Dendritic cell treated with granulocyte-macrophage colony-stimulating factor and Interleukin-4, amounts not matched to agents 40 ng/mL and 50 ng/mL, for 4 days (primary cell): ENCODE measurements at regions of chr12 and their contacts with region 1.

Region 1: DNA sequence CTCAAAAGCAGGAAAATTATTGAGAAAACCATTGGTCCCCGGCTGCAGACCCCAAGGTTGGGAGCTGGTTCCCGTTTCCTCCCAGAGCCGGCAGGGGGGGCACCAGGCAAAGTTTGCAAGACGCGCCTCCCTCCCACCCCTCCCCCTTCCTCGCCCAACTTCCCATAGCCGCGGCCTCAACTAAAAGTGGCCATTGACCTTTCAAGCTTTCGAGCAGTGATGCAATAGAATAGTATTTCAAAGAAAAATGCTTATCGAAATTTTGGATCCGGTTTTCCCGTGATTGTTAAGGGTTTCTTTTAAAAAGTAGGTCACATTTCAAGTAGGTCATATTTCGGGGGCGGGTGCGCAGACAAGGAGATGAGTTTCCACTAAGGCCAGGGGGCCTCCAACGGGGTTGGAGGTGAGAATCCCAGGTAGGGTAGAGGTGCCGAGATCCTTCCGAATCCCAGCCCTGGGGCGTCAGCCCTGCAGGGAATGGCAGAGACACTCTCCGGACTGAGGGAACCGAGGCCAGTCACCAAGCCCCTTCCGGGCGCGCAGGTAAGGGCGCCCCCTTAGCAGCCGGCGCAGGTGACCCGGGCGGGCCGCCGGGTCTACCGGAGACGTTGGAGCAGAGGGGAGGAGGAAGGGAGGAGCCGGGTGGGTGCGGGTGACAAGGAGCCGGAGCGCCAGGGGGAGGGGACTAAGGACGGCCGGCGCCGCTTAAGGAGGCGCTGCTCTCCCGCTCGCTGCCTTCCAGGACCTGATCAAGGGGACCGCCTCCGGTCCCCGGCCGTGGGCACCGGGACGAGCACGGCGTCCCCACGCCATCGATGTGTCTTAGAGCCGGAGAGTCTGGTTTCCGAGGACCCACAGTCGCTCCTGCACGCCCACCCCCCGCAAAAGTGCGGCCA is 2.6 kb upstream of the SOCS2 start:
- H3K4me3 Mint-ChIP-seq: peak overlapping the region; percentile 86
- H3K27ac Mint-ChIP-seq: peak overlapping the region; percentile 93
- H3K4me1 Mint-ChIP-seq: peaks cover 30% of the 10 kb centered on the region
- H3K27me3 Mint-ChIP-seq: peaks cover 60% of the 10 kb centered on the region

Region 2: DNA sequence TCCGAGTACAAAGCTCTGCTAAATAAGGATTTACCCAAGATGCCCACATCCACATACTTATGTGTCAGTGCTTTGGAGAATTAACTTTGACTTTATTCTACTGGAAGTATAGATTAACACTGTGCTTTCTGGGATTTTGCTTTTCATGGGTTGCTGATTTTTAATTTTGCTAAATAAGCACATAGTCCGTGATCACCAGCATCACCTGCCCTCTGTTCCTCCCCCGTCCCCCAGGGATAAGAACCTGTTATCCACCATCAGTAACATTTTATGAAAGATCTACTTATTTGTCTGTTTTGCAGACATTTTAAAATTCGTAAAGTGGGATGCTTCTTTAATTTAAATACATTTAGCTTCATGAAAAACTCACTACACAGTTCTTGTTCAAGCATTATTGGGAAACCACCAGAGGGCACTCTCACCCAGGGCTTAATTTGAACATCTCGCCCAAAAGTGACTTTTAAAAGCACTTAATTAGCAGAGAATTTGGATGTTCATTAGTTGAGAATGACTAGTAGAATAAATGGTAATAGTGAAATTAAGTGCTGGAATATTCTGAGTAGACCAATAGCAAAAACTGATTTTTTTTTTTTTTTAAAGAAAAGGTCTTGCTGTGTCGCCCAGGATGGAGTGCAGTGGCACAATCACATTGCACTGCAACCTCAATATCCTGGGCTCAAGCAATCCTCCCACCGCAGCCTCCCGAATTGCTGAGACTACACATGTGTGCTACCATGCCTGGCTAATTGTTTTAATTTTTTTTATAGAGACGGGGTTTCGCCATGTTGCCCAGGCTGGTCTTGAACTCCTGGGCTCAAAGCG is 66.9 kb before region 1 on chr12:
- intact Hi-C with region 1: loop called (anchors 2 kb)
- H3K4me3 Mint-ChIP-seq: no peak overlapping the region
- H3K27ac Mint-ChIP-seq: no peak overlapping the region
- H3K4me1 Mint-ChIP-seq: no peaks in the 10 kb centered on the region
- H3K27me3 Mint-ChIP-seq: no peaks in the 10 kb centered on the region

Region 3: DNA sequence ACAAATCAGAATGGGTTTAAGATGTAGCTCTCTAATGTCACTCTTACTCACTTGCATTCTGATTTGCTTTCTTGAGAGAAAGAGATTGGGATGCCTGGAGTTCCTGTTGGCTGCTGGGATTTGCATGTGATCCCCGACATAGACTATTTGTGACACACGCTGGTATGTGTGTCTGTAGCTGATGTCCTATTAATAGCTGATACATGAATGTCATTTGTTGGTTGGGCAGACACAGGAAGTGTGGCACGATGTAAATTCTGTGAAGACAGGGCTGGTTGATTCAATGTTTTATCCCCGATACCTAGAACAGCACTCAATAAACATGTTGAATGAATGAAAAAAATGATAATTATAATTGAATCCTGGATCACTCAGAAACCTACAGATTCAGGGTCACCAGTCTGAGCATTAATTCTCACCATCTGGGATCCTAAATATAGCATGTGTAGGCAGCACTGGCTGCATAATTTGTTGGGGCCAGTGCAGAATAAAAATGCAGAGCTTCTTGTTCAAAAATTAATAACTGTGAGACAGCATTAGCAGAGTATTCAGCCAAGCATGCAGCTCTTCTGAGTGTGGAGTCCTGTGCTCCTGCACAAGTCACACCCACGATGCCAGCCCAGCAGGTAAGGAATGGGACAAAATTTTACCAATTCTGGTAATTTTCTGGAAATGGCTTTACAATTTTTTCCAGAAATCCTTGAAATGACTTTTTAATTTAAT is 33.0 kb before region 1 on chr12:
- intact Hi-C with region 1: no loop called
- H3K4me3 Mint-ChIP-seq: no peak overlapping the region
- H3K27ac Mint-ChIP-seq: no peak overlapping the region
- H3K4me1 Mint-ChIP-seq: no peaks in the 10 kb centered on the region
- H3K27me3 Mint-ChIP-seq: no peaks in the 10 kb centered on the region

Region 4: DNA sequence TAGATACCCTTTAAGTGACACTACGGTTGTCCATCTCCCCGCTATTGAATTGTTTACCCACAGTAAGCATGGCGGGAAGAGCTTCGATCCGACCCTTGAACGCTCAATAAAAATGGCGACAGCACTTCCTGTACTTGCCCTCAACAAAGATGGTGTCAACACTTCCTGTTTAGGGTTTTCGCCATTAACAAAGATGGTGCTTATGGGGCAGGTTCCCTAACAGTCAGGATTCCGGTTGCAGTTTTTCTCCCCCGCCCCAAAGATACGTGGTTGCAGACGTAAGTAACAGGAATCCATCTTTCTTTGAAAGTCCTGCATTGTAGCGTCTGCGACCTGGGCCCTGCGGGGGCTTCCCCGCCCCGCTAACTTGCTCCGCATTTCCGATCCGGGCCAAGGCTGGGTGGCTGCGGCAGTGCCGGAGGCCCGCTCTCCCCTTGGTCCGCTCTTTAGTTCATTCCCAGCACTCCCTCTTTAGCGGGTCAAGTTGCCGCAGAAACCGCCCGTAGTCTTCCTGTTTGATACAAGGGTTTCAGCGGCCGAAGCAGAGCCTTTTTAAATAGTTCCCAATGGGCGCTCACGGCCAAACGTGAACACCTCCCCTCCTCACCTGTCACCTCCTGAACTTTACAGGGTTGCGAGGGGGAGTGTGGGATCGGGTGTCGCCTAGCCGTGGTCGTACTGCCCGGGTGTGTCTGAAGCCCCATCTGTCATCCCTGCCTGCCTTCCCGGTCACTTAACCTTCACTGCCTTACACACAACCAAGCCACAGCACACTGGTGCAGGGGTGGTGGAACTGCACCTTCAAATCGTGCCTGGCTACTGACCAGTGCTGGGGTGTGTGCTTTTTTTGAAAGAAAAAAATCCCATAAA is 107.5 kb after region 1 on chr12 and contains the start of gene CRADD:
- intact Hi-C with region 1: loop called (anchors 2 kb)
- H3K4me3 Mint-ChIP-seq: peak within 1 kb of the TSS; percentile 89
- H3K27ac Mint-ChIP-seq: peak within 1 kb of the TSS; percentile 100
- H3K4me1 Mint-ChIP-seq: peaks cover 20% of the 10 kb centered on the region
- H3K27me3 Mint-ChIP-seq: peaks cover 5% of the 10 kb centered on the region

Region 5: GRCh38 chr12:93802698-93803423 is 233.0 kb after region 1 on chr12:
- intact Hi-C with region 1: no loop called
- H3K4me3 Mint-ChIP-seq: no peak overlapping the region
- H3K27ac Mint-ChIP-seq: no peak overlapping the region
- H3K4me1 Mint-ChIP-seq: peaks cover 17% of the 10 kb centered on the region
- H3K27me3 Mint-ChIP-seq: no peaks in the 10 kb centered on the region

Region 6: DNA sequence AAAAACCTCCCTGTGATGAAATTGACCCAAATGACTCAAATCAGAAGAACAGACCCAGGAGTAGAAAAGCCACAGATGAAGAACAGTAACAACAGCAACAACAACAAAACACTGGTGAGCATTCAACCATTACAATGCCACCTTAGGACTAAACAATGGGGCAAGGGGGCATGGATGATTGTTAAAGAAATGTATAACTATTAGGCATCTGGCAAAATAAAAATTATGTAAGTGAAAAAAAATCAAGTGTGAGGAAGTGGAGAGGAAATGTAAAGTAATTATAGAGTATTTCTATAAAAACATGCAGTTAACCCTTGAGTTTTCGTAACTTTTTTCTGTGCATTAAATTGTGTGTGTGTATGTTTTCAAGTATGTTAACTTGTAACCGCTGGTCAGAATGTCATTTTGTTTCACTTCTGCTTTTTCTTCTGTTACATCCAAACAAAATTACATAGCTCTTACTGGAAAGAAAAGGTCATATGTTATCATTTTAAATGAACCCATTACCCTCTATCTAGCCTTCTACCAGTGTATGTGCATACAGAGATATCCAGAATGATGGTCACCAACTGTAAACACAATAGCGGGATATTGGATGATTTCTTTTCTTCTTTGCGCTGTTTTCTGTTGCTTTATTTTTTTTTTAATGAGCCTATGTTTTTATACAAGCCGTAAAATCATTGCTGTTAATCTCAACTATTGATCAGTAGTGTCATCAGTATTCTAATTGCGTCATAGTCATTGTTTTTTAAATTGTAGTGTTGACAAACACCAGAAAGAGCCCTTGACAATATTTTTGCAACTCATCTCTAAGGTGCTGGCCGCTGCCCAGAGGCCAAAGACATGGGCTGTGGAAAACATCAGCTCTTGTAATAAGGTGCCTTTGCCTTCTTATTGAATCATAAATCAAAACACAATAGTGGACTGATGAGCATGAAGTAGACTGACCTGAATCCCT is 277.9 kb after region 1 on chr12:
- intact Hi-C with region 1: loop called (anchors 2 kb)
- H3K4me3 Mint-ChIP-seq: peak overlapping the region; percentile 30
- H3K27ac Mint-ChIP-seq: peak overlapping the region; percentile 96
- H3K4me1 Mint-ChIP-seq: peaks cover 47% of the 10 kb centered on the region
- H3K27me3 Mint-ChIP-seq: no peaks in the 10 kb centered on the region

Region 7: GRCh38 chr12:93938931-93939330 is 369.0 kb after region 1 on chr12:
- intact Hi-C with region 1: no loop called
- H3K4me3 Mint-ChIP-seq: no peak overlapping the region
- H3K27ac Mint-ChIP-seq: no peak overlapping the region
- H3K4me1 Mint-ChIP-seq: no peaks in the 10 kb centered on the region
- H3K27me3 Mint-ChIP-seq: no peaks in the 10 kb centered on the region

Region 8: DNA sequence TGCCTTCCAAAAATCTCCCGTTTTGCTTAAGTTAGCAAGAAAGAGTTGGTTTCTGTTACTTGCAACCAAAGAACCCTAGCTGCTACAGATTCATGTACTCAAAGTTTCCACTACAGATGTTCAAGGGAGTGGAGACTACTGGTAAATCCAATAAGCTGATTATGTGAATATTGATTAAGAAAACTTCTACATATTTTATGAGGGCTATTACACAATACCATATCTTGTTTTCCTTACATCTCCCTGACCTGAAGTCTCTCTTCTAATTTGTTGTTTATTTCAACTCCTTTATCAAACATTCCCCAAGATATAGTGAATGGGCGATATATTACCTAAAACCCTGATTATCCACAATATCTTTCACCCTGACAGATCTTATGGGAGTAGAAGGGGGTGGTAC is 414.1 kb after region 1 on chr12:
- intact Hi-C with region 1: no loop called
- H3K4me3 Mint-ChIP-seq: no peak overlapping the region
- H3K27ac Mint-ChIP-seq: no peak overlapping the region
- H3K4me1 Mint-ChIP-seq: no peaks in the 10 kb centered on the region
- H3K27me3 Mint-ChIP-seq: peaks cover 2% of the 10 kb centered on the region

Region 9: GRCh38 chr12:94074980-94075928 is 505.4 kb after region 1 on chr12:
- intact Hi-C with region 1: loop called (anchors 10 kb)
- H3K4me3 Mint-ChIP-seq: no peak overlapping the region
- H3K27ac Mint-ChIP-seq: no peak overlapping the region
- H3K4me1 Mint-ChIP-seq: peaks cover 18% of the 10 kb centered on the region
- H3K27me3 Mint-ChIP-seq: peaks cover 7% of the 10 kb centered on the region